ENCODE measurements at regions of chr4 and their contacts with region 1.

Region 1: GRCh38 chr4:48906206-48907173 is at the start of gene OCIAD2:
- DNase-seq: peak; percentile 64
- H3K4me3 Mint-ChIP-seq: peak within 1 kb of the TSS; percentile 82
- H3K27ac Mint-ChIP-seq: peak within 1 kb of the TSS; percentile 76
- H3K4me1 Mint-ChIP-seq: peaks cover 40% of the 10 kb centered on the region
- H3K27me3 Mint-ChIP-seq: no peaks in the 10 kb centered on the region
- CTCF ChIP-seq: no peak
- total RNA-seq, gene OCIAD2: 66.3 and 94.1 TPM in 2 replicates

Region 2: GRCh38 chr4:47692639-47693180 is 1213.8 kb before region 1 on chr4:
- CTCF ChIA-PET with region 1: no interaction called
- POLR2A ChIA-PET with region 1: no interaction called
- intact Hi-C with region 1: no loop called
- DNase-seq: no peak
- H3K4me3 Mint-ChIP-seq: no peak overlapping the region
- H3K27ac Mint-ChIP-seq: no peak overlapping the region
- H3K4me1 Mint-ChIP-seq: no peaks in the 10 kb centered on the region
- H3K27me3 Mint-ChIP-seq: no peaks in the 10 kb centered on the region
- CTCF ChIP-seq: no peak

Region 3: GRCh38 chr4:48766131-48766792 is 140.2 kb before region 1 on chr4:
- CTCF ChIA-PET with region 1: no interaction called
- POLR2A ChIA-PET with region 1: no interaction called
- intact Hi-C with region 1: no loop called
- DNase-seq: no peak
- H3K4me3 Mint-ChIP-seq: no peak overlapping the region
- H3K27ac Mint-ChIP-seq: no peak overlapping the region
- H3K4me1 Mint-ChIP-seq: peaks cover 26% of the 10 kb centered on the region
- H3K27me3 Mint-ChIP-seq: no peaks in the 10 kb centered on the region
- CTCF ChIP-seq: no peak

Region 4: GRCh38 chr4:48830706-48831531 is 75.6 kb before region 1 on chr4 and contains the start of gene OCIAD1:
- CTCF ChIA-PET with region 1: interaction called, 3 read pairs
- POLR2A ChIA-PET with region 1: interaction called, 12 read pairs
- intact Hi-C with region 1: loop called (anchors 5 kb)
- DNase-seq: peak; percentile 99
- H3K4me3 Mint-ChIP-seq: peak within 1 kb of the TSS; percentile 95
- H3K27ac Mint-ChIP-seq: peak within 1 kb of the TSS; percentile 97
- H3K4me1 Mint-ChIP-seq: peaks cover 5% of the 10 kb centered on the region
- H3K27me3 Mint-ChIP-seq: no peaks in the 10 kb centered on the region
- CTCF ChIP-seq: no peak
- total RNA-seq, gene OCIAD1: 207 and 224 TPM in 2 replicates

Region 5: DNA sequence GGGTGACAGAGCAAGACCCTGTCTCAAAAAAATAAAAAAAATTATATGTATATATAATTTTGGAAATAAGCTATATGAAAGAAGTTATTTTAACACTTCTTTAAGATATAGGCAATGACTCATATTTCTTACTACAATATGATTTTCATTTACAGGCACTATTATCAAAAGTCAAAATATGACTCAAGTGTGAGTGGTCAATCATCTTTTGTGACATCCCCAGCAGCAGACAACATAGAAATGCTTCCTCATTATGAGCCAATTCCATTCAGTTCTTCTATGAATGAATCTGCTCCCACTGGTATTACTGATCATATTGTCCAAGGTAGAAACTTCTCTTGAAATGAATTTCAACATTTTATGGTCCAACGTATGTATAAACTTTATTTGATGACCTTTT is 54.8 kb before region 1 on chr4:
- CTCF ChIA-PET with region 1: no interaction called
- POLR2A ChIA-PET with region 1: no interaction called
- intact Hi-C with region 1: no loop called
- DNase-seq: no peak
- H3K4me3 Mint-ChIP-seq: no peak overlapping the region
- H3K27ac Mint-ChIP-seq: no peak overlapping the region
- H3K4me1 Mint-ChIP-seq: peaks cover 6% of the 10 kb centered on the region
- H3K27me3 Mint-ChIP-seq: no peaks in the 10 kb centered on the region
- CTCF ChIP-seq: no peak